ENCODE measurements at regions of chr6 and their contacts with region 1.

Region 1: DNA sequence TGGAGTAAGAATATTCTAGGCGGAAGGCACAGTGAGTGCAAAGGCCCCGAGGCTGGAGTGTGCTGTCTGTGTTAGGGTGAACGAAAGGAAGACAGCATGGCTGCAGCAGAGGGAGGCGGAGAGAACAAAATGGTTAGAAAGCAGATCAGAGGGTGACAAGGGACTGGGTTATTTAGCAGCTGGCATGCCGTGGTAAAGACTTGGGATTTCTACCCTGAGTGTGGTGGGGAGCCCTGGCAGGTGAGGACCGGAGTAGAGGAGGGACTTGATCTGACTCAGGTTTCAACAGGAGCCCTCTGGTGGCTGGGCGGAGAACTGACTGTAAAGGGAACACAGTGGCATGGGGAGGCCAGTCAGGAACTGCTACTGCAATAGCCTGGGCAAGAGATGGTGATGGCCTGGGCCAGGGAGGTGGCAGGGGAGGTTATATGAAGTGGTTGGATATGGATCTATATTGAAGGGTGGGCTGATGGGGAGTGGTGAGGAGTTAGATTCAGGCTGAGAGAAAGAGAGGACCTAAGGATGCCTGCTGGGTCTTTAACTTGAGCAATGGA is 38.0 kb downstream of the PIM1 start:
- DNase-seq: peak; percentile 67 to 85 (median 82)
- ATAC-seq: peak; percentile 87
- H3K4me3 ChIP-seq: no peak overlapping the region
- H3K4me3 Mint-ChIP-seq: peak overlapping the region; percentile 4 to 77 (median 68)
- H3K27ac ChIP-seq: peak overlapping the region; percentile 23
- H3K27ac Mint-ChIP-seq: peak overlapping the region; percentile 72 to 98 (median 91)
- H3K4me1 ChIP-seq: peaks cover 36 to 39% of the 10 kb centered on the region in 2 donors
- H3K4me1 Mint-ChIP-seq: peaks cover 36 to 69% (median 64%) of the 10 kb centered on the region in 7 donors
- H3K27me3 ChIP-seq: no peaks in the 10 kb centered on the region
- H3K27me3 Mint-ChIP-seq: no peaks in the 10 kb centered on the region

Region 2: DNA sequence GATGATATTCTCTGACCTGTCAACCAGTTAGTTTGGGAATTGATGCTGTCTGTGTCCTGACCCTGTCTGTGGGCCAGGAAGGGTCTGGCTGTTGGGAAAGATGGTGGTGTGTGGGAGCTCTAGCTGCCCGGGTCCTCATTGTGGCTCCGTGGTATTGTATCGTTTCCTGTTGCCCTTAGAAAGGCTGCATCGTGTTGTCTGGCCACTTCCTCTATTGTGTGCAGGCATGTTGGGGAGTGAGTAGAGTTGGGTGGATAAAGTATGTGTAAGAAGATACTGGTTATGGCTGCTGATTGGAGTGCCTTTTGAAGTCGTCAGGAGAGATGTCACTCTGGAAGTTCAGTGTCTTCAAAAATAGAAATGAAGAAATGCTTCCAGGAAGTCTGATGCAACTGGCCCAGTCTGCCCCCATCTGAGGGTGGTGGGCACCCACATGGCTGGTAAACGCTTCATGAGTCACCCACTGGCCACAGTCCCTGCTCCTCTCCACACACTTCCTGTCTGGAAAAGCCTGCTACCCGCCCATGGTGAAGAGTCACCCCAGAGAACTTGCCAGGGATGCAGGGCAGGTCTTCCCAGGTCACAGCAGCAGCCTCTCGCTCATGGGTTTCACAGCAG is 1837.7 kb before region 1 on chr6:
- CTCF ChIA-PET with region 1: no interaction called
- POLR2A ChIA-PET with region 1: no interaction called
- intact Hi-C with region 1: no loop called
- DNase-seq: peak in 2 of 9 donors; percentile 21 to 46
- ATAC-seq: peak; percentile 89
- H3K4me3 ChIP-seq: peak overlapping the region; percentile 12
- H3K4me3 Mint-ChIP-seq: peak overlapping the region; percentile 68 to 84 (median 76)
- H3K27ac ChIP-seq: peak overlapping the region; percentile 45
- H3K27ac Mint-ChIP-seq: peak overlapping the region; percentile 63 to 94 (median 86)
- H3K4me1 ChIP-seq: peaks cover 35 to 40% of the 10 kb centered on the region in 2 donors
- H3K4me1 Mint-ChIP-seq: peaks cover 48 to 84% (median 68%) of the 10 kb centered on the region in 7 donors
- H3K27me3 ChIP-seq: no peaks in the 10 kb centered on the region
- H3K27me3 Mint-ChIP-seq: no peaks in the 10 kb centered on the region

Region 3: DNA sequence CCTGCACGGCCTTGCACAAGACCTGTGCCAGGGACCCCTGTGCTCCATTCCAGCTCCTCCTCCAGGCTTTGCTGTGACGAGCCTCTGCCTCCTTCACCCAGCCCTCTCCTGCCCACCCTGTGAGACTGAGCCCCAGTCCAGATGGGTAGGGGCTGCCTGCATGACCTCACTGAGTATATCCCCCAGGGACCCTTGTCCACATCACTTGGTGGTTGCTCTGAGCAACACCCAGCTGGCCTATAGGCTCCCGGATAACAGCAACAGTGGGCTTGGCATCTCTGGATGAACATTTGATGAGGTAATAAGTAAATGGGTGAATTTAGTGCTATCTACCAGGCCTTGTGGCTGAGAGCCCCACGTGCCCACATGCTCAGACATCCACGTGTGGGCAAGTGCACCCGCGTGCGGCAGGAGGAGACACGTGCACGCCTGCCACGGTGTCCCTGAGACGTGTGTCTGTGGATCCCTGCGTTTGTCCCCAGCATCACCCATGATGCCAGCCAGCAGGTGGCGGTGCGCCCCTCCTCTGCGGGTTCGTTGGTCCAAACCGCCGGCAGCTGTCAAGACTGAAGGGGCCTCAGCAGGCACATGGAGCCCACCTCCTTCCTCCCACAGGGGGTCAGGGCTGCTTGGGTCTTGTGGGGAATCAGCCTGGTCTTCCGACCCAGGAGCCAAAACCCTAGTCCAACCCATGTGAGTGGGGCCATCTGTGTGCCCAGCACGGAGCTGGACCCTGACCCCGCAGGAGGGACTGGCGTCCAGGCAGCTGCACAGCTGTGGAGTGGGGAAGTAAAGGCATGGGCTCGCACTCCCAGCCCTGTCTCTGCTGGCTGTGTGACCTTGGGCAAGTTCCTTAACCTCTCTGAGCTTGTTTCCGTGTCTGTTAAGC is 156.6 kb before region 1 on chr6:
- CTCF ChIA-PET with region 1: interaction called, 96 read pairs
- POLR2A ChIA-PET with region 1: interaction called, 22 read pairs
- intact Hi-C with region 1: loop called (anchors 1 kb)
- DNase-seq: peak; percentile 73 to 87 (median 83)
- ATAC-seq: peak; percentile 83
- H3K4me3 ChIP-seq: peak overlapping the region; percentile 58
- H3K4me3 Mint-ChIP-seq: peak overlapping the region; percentile 66 to 94 (median 72)
- H3K27ac ChIP-seq: peak overlapping the region; percentile 75
- H3K27ac Mint-ChIP-seq: peak overlapping the region; percentile 84 to 99 (median 92)
- H3K4me1 ChIP-seq: peaks cover 46 to 56% of the 10 kb centered on the region in 2 donors
- H3K4me1 Mint-ChIP-seq: peaks cover 49 to 70% (median 57%) of the 10 kb centered on the region in 7 donors
- H3K27me3 ChIP-seq: no peaks in the 10 kb centered on the region
- H3K27me3 Mint-ChIP-seq: no peaks in the 10 kb centered on the region

Region 4: DNA sequence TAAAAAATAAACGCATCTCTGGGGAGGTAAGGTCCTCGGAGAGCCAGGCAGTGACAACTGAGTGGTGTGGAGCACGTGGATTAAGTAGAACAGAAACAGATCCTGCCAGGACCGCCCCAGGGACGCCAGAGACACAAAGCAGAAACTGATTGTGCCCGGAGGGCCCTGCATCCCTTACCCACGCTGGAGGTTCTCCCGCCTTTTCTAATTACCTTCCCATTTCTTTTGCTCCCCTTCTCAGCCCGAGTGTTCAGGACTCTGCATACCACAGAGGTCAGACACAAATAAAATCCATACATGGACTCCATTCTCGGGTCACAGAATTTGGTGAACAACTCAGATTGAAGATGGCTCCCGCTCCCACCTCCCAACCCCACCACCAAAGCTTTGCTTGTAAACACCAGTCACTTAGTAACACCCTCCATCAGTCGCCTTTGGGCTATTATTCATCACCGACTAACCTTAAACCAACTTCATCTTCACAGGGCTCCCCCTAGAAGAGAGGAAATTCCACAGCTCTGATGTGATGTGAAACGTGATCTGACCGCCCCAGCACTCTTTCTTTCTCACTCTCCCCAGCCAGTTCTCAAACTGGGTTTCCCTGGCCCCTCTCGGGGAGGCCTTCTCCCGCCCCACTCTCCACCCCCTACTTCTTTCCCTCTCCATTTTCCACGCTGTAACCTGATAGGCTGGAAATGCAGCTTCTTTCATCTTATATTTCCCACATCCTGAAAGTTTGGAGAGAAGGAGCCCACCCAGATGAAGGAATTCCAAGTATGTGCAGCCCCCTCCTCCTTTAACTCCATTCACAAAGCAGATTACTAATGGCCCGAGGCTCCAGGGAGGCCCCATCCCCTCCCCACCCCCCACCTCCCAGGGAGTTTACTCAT is 70.5 kb before region 1 on chr6:
- CTCF ChIA-PET with region 1: no interaction called
- POLR2A ChIA-PET with region 1: no interaction called
- intact Hi-C with region 1: no loop called
- DNase-seq: peak in 1 of 9 donors; percentile 48
- ATAC-seq: peak; percentile 73
- H3K4me3 ChIP-seq: no peak overlapping the region
- H3K4me3 Mint-ChIP-seq: no peak overlapping the region
- H3K27ac ChIP-seq: no peak overlapping the region
- H3K27ac Mint-ChIP-seq: peak overlapping the region in 1 of 9 donors; percentile 38
- H3K4me1 ChIP-seq: peaks cover 0 to 19% of the 10 kb centered on the region in 2 donors
- H3K4me1 Mint-ChIP-seq: peaks cover 0 to 32% (median 9%) of the 10 kb centered on the region in 7 donors
- H3K27me3 ChIP-seq: no peaks in the 10 kb centered on the region
- H3K27me3 Mint-ChIP-seq: no peaks in the 10 kb centered on the region

Region 5: DNA sequence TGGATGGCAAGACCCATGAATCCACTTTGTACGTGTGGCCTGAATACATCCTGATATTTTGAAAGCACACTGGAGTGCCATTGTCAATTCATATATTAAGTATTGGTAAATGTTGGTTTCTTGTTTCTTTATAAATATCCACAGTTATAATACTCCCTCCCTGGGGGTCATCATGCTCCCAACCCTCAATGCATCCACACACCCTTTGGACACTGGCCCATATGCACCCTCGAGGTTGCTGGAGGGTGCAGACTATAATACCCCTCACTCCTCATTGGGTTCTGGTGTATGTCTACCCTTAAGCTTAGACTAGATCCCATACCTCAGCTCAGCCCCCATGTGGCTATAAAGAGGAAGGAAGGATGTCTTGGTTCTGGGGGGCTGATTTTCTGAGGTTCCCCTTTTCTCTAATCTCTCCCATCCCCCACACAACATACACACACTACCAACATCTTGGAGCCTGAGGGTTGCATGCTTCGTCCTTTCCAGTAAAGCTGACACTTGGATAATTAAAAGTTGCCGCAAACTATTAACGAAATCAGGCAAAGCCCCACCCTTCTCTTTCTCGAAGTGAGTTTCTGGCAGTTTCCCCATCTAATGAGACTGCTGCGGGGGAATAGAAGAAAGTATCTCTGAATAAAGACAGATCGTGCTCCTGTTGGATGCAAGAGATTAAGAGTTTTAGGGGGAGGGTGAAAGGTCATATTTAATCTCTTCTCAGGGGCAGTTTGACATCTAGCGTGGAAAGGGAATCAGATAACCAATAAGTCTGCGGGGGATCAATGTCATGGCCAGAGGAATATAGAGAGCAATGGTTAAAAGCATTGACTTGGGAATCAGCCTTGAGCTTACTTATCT is 30.7 kb before region 1 on chr6:
- CTCF ChIA-PET with region 1: interaction called, 112 read pairs
- POLR2A ChIA-PET with region 1: interaction called, 89 read pairs
- intact Hi-C with region 1: loop called (anchors 1 kb)
- DNase-seq: no peak
- ATAC-seq: peak; percentile 52
- H3K4me3 ChIP-seq: no peak overlapping the region
- H3K4me3 Mint-ChIP-seq: peak overlapping the region in 9 of 10 donors; percentile 25 to 99 (median 43)
- H3K27ac ChIP-seq: peak overlapping the region; percentile 77
- H3K27ac Mint-ChIP-seq: peak overlapping the region; percentile 73 to 96 (median 93)
- H3K4me1 ChIP-seq: peaks cover 54 to 67% of the 10 kb centered on the region in 2 donors
- H3K4me1 Mint-ChIP-seq: peaks cover 46 to 78% (median 72%) of the 10 kb centered on the region in 7 donors
- H3K27me3 ChIP-seq: no peaks in the 10 kb centered on the region
- H3K27me3 Mint-ChIP-seq: no peaks in the 10 kb centered on the region

Region 6: GRCh38 chr6:37190159-37190535 is 17.8 kb before region 1 on chr6:
- CTCF ChIA-PET with region 1: interaction called, 15 read pairs
- POLR2A ChIA-PET with region 1: interaction called, 8 read pairs
- intact Hi-C with region 1: loop called (anchors 1 to 2 kb)
- DNase-seq: no peak
- ATAC-seq: no peak
- H3K4me3 ChIP-seq: no peak overlapping the region
- H3K4me3 Mint-ChIP-seq: peak overlapping the region in 8 of 10 donors; percentile 18 to 67 (median 26)
- H3K27ac ChIP-seq: no peak overlapping the region
- H3K27ac Mint-ChIP-seq: peak overlapping the region in 6 of 9 donors; percentile 30 to 81 (median 56)
- H3K4me1 ChIP-seq: peaks cover 28 to 30% of the 10 kb centered on the region in 2 donors
- H3K4me1 Mint-ChIP-seq: peaks cover 30 to 75% (median 66%) of the 10 kb centered on the region in 7 donors
- H3K27me3 ChIP-seq: no peaks in the 10 kb centered on the region
- H3K27me3 Mint-ChIP-seq: no peaks in the 10 kb centered on the region

Region 7: GRCh38 chr6:37663019-37663810 is 455.2 kb after region 1 on chr6:
- CTCF ChIA-PET with region 1: no interaction called
- POLR2A ChIA-PET with region 1: no interaction called
- intact Hi-C with region 1: no loop called
- DNase-seq: no peak
- ATAC-seq: no peak
- H3K4me3 ChIP-seq: no peak overlapping the region
- H3K4me3 Mint-ChIP-seq: no peak overlapping the region
- H3K27ac ChIP-seq: no peak overlapping the region
- H3K27ac Mint-ChIP-seq: peak overlapping the region in 1 of 9 donors; percentile 60
- H3K4me1 ChIP-seq: no peaks in the 10 kb centered on the region
- H3K4me1 Mint-ChIP-seq: peaks cover 0 to 6% (median 0%) of the 10 kb centered on the region in 7 donors
- H3K27me3 ChIP-seq: no peaks in the 10 kb centered on the region
- H3K27me3 Mint-ChIP-seq: peaks cover 0 to 16% (median 8%) of the 10 kb centered on the region in 5 donors